WTC11 (cell line): ENCODE measurements at regions of chr14 and their contacts with region 1.

Region 1: DNA sequence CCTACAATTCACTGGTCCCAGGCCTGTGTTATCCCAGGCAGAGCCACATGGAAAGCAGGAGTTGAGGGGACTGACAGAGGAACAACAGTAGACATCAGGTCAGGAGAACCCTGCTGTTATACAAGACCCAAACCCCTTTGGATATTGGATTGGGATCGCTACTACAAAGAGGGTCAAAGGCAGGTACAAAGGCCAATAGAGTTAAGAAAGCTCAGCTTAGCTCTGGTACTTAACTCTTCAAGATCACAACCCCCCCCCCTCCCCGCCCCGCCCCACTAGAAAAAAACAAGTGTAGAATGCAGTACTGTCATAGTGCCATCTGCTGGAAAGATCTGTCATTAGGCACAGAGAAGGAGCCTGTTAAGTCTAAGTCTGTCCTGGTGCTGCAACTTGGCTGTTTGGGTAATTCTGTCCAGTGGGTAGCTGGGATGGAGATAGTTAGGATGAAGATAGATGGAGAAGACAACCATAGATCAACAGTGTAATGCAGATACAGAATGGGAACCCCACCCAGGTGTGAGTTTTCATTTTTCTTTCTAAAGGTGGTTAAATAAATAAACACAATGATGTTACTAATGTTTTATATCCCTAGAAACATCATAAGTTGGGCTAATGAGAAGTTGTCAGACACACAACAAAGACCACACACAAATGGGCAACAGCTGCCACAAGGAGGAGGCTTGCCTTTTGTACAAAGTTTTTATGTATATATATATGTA is 17.2 kb downstream of the REM2 start:
- DNase-seq: peak; percentile 28
- ATAC-seq: peak; percentile 79
- H3K4me3 Mint-ChIP-seq: no peak overlapping the region
- H3K27ac Mint-ChIP-seq: no peak overlapping the region
- H3K4me1 Mint-ChIP-seq: peaks cover 8% of the 10 kb centered on the region
- H3K27me3 Mint-ChIP-seq: peaks cover 49% of the 10 kb centered on the region
- CTCF ChIP-seq: 0 out of 2 replicates have a peak, but pooled peaks have one; percentile 27

Region 2: GRCh38 chr14:22872033-22872832 is 28.0 kb before region 1 on chr14:
- CTCF ChIA-PET with region 1: interaction called, 27 read pairs
- POLR2A ChIA-PET with region 1: interaction called, 4 read pairs
- DNase-seq: peak; percentile 94
- ATAC-seq: peak; percentile 67
- H3K4me3 Mint-ChIP-seq: peak overlapping the region; percentile 83
- H3K27ac Mint-ChIP-seq: peak overlapping the region; percentile 36
- H3K4me1 Mint-ChIP-seq: peaks cover 18% of the 10 kb centered on the region
- H3K27me3 Mint-ChIP-seq: no peaks in the 10 kb centered on the region
- CTCF ChIP-seq: peak; percentile 90

Region 3: DNA sequence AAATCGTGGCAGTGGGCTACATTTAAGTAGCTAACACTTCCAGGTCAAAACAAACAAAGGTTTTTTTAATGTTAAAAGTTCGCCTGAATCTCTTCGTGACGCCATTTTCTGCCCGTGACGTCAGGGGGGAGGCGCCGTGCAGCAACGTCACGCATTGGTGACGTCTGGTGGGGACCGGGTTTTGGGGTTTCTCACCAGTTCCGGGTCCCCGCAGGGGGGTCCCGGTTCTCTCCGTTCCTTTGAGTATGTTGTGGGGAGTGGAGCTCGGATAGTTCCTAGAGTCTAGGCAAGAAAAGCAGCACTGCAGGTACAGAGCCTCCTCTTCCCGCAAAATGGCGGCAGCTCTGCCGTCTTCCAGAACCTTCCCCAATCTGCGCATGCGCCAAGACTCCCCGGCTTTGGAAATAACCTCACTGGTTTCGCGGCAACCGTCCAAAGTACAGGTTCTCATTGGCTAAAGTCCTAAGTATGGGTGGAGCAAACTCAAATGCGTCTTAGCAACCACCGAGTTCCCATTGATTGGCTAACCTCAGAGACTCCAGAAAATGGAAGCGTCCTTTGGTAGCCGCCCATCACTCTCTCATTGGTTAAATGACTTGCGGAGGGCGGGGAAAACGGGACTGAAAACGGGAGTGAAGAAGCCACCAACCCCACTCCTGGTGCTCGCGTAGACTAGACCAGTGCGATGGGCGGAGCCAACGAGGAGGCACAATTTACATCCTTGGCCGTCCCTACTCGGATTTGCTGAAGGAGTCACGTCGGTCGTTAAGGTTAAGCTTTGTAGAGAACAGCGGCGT is 18.8 kb after region 1 on chr14 and contains the start of gene RBM23:
- CTCF ChIA-PET with region 1: interaction called, 12 read pairs
- POLR2A ChIA-PET with region 1: interaction called, 3 read pairs
- DNase-seq: peak; percentile 100
- ATAC-seq: peak; percentile 98
- H3K4me3 Mint-ChIP-seq: peak within 1 kb of the TSS; percentile 92
- H3K27ac Mint-ChIP-seq: peak within 1 kb of the TSS; percentile 100
- H3K4me1 Mint-ChIP-seq: peaks cover 17% of the 10 kb centered on the region
- H3K27me3 Mint-ChIP-seq: peaks cover 2% of the 10 kb centered on the region; the same call in 1 of the 2 replicates
- CTCF ChIP-seq: no peak
- total RNA-seq, gene RBM23: 42.4 to 49.4 TPM (median 47.4 TPM) in 3 replicates